Heart left ventricle (tissue), 16 donors: ENCODE measurements at regions of chr6 and their contacts with region 1.

Region 1: GRCh38 chr6:8063761-8064637 is at the start of gene BLOC1S5:
- DNase-seq: peak; percentile 97 to 98 (median 97)
- ATAC-seq: peak; percentile 97 to 99 (median 98)
- H3K4me3 ChIP-seq: peak within 1 kb of the TSS; percentile 53 to 92 (median 88)
- H3K27ac ChIP-seq: peak within 1 kb of the TSS; percentile 72 to 92 (median 90)
- H3K4me1 ChIP-seq: peaks cover 0 to 21% (median 7%) of the 10 kb centered on the region in 12 donors
- H3K27me3 ChIP-seq: no peaks in the 10 kb centered on the region
- CTCF ChIP-seq: peak in 3 of 12 donors; percentile 5 to 25 (median 19)
- POLR2A ChIP-seq: peak in 1 of 2 donors; percentile 82
- total RNA-seq, gene BLOC1S5: 6.9 to 15.2 (median 8.8) TPM

Region 2: GRCh38 chr6:7910654-7911344 is 153.2 kb before region 1 on chr6 and contains the start of gene TXNDC5:
- intact Hi-C with region 1: loop called in 4 of 10 experiments (anchors 5 to 10 kb)
- DNase-seq: peak; percentile 84 to 91 (median 87)
- ATAC-seq: peak; percentile 76 to 94 (median 90)
- H3K4me3 ChIP-seq: peak within 1 kb of the TSS; percentile 57 to 97 (median 74)
- H3K27ac ChIP-seq: peak within 1 kb of the TSS; percentile 14 to 88 (median 85)
- H3K4me1 ChIP-seq: peaks cover 0 to 38% (median 17%) of the 10 kb centered on the region in 12 donors
- H3K27me3 ChIP-seq: no peaks in the 10 kb centered on the region
- CTCF ChIP-seq: no peak
- POLR2A ChIP-seq: peak in 1 of 2 donors; percentile 43
- total RNA-seq, gene TXNDC5: 33.4 to 110 (median 43.6) TPM

Region 3: DNA sequence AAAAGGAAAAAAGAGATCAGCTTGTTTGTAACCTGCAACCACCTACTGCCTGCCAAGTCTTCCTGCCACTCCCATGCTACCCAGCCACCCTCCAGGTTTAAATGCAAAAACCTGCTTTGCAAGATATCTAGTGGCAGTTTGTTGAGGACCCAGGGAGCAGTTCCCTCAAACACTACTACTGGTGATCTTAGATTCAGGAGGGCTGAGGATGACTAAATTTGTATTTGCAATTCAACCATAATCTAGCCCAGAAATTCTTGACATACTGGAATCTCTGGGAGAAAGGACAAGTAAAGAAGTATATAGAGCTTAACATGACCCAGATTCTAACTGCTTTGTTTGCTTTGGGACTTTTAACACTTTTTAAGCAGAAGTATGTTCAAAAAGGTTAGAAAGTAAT is 94.6 kb before region 1 on chr6:
- intact Hi-C with region 1: no loop called
- DNase-seq: no peak
- ATAC-seq: no peak
- H3K4me3 ChIP-seq: no peak overlapping the region
- H3K27ac ChIP-seq: no peak overlapping the region
- H3K4me1 ChIP-seq: peaks cover 0 to 4% (median 0%) of the 10 kb centered on the region in 12 donors
- H3K27me3 ChIP-seq: no peaks in the 10 kb centered on the region
- CTCF ChIP-seq: no peak
- POLR2A ChIP-seq: no peak

Region 4: DNA sequence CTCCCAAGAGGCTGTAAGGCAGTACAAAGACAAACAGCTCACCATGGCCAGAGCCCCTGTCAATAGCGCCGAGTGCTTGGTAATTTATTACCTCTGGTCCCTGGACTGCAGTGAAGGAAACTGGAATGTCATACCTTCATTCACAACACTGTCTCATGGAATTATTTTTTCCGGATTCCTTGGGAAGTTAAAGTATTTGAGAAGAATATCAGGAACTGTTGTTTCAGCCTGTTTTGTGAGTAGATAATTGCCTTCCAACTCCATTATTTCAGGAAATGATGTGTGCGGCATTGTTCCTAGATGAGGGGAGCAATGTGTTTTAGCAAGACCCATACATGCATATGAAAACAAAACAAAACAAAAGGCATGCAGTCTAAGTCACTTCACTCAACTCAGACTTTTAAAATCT is 63.8 kb before region 1 on chr6:
- intact Hi-C with region 1: loop called in 3 of 10 experiments (anchors 5 to 10 kb)
- DNase-seq: no peak
- ATAC-seq: peak in 3 of 4 donors; percentile 54 to 69 (median 69)
- H3K4me3 ChIP-seq: no peak overlapping the region
- H3K27ac ChIP-seq: peak overlapping the region in 5 of 12 donors; percentile 2 to 24 (median 11)
- H3K4me1 ChIP-seq: peaks cover 0 to 20% (median 6%) of the 10 kb centered on the region in 12 donors
- H3K27me3 ChIP-seq: no peaks in the 10 kb centered on the region
- CTCF ChIP-seq: no peak
- POLR2A ChIP-seq: no peak

Region 5: GRCh38 chr6:8006208-8006607 is 57.8 kb before region 1 on chr6:
- intact Hi-C with region 1: loop called in 3 of 10 experiments (anchors 5 to 10 kb)
- DNase-seq: no peak
- ATAC-seq: peak in 2 of 4 donors; percentile 60 to 73
- H3K4me3 ChIP-seq: no peak overlapping the region
- H3K27ac ChIP-seq: no peak overlapping the region
- H3K4me1 ChIP-seq: peaks cover 0 to 3% (median 0%) of the 10 kb centered on the region in 12 donors
- H3K27me3 ChIP-seq: no peaks in the 10 kb centered on the region
- CTCF ChIP-seq: peak; percentile 27 to 65 (median 56)
- POLR2A ChIP-seq: no peak

Region 6: GRCh38 chr6:8017276-8017701 is 46.7 kb before region 1 on chr6:
- intact Hi-C with region 1: loop called in 1 of 10 experiments (anchors 5 kb)
- DNase-seq: no peak
- ATAC-seq: no peak
- H3K4me3 ChIP-seq: peak overlapping the region in 1 of 12 donors; percentile 44
- H3K27ac ChIP-seq: peak overlapping the region in 3 of 12 donors; percentile 6 to 20 (median 6)
- H3K4me1 ChIP-seq: peaks cover 0 to 10% (median 0%) of the 10 kb centered on the region in 12 donors
- H3K27me3 ChIP-seq: no peaks in the 10 kb centered on the region
- CTCF ChIP-seq: no peak
- POLR2A ChIP-seq: no peak

Region 7: DNA sequence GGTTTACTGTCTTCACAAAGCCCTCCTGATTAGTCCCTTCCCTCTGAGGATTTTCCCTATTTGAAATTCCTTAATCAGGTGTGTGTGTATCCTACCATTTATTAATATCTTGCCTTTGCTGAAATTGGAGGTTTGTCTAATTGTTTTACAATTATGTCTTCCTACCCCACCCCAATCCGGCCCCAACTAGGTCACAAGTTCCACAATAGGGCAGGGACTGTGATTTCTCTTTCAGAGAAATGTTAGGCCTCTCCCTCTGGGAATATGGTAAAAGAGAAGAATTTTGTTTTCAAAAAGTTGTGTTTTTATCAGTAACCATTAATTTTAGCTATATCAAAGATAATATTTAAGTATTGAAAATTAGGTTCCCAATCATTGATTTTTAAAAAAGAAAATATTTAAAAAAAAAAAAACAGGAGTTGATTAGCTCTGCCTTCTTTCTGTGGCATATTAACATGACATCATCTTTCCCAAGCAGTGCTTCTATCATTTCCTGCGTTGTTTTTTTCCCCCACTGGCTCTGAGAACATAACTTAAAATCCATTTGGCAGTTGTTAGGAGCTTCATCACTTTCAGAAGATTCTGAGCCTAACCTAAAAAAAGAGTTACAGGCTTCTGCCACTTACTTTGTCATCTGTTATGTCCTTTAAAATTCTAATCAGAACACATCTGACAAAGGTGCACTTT is 35.9 kb before region 1 on chr6:
- intact Hi-C with region 1: loop called in 1 of 10 experiments (anchors 5 kb)
- DNase-seq: peak in 1 of 5 donors; percentile 33
- ATAC-seq: peak; percentile 29 to 87 (median 80)
- H3K4me3 ChIP-seq: no peak overlapping the region
- H3K27ac ChIP-seq: peak overlapping the region; percentile 3 to 78 (median 59)
- H3K4me1 ChIP-seq: peaks cover 0 to 33% (median 22%) of the 10 kb centered on the region in 12 donors
- H3K27me3 ChIP-seq: no peaks in the 10 kb centered on the region
- CTCF ChIP-seq: no peak
- POLR2A ChIP-seq: no peak

Region 8: GRCh38 chr6:8102122-8102958 is 38.3 kb after region 1 on chr6 and contains the start of gene EEF1E1:
- intact Hi-C with region 1: loop called in 1 of 10 experiments (anchors 1 kb)
- DNase-seq: peak; percentile 94 to 96 (median 94)
- ATAC-seq: peak; percentile 100
- H3K4me3 ChIP-seq: peak within 1 kb of the TSS; percentile 77 to 98 (median 90)
- H3K27ac ChIP-seq: peak within 1 kb of the TSS in 8 of 12 donors; percentile 31 to 66 (median 60)
- H3K4me1 ChIP-seq: peaks cover 3 to 21% (median 9%) of the 10 kb centered on the region in 12 donors
- H3K27me3 ChIP-seq: peaks cover 0 to 12% (median 0%) of the 10 kb centered on the region in 9 donors
- CTCF ChIP-seq: peak in 1 of 12 donors; percentile 25
- POLR2A ChIP-seq: no peak
- total RNA-seq, gene EEF1E1: 10.3 to 22.2 (median 14.3) TPM

Region 9: GRCh38 chr6:8335381-8335780 is 271.4 kb after region 1 on chr6:
- intact Hi-C with region 1: no loop called
- DNase-seq: no peak
- ATAC-seq: no peak
- H3K4me3 ChIP-seq: no peak overlapping the region
- H3K27ac ChIP-seq: no peak overlapping the region
- H3K4me1 ChIP-seq: no peaks in the 10 kb centered on the region
- H3K27me3 ChIP-seq: no peaks in the 10 kb centered on the region
- CTCF ChIP-seq: no peak
- POLR2A ChIP-seq: no peak